WTC11 (cell line): ENCODE measurements at regions of chr11 and their contacts with region 1.

Region 1: DNA sequence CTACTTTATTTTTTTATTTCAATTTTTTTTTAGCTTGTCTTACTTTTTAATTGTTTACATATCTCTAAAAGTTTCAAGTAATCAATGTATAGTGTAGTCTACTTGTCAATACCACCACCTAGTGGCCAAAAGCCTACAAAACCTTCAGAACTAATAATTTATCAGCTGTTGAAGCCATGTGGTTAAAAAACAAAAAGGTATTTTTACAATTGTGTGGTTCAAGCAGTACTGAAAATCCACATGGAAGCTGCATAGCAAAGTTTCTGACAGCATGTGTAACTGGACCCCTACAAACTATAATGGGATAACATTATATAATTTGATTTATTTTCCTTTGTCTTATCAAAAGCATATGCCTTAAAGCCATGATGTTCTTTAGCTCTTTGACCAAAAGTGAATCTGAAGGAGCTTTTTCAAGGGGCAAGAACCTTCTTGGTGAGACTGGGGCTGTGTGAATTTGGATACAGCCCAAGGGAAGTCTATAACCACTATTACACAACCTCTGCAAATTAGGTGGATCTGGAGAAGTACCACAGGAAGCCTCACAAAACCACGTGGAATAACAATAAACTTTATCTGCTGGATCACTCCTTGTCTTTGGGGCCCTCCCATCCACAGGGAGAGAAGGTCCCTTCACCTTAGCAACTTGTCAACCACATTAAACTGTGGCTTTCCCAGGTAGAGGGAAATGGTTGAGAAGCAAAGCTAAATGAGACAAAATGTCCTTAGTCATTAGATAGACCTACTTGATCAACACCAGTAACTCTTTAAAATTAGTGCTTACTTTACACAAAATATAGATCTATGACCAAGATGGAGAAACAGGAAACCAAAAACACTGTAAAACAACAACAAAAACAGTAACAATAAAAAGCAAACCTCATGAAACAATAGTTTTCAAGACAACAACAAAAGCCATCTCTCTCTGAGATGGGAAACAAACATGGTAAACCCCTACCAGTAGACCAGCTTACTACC is 9.9 kb downstream of the NARS2 start:
- DNase-seq: no peak
- ATAC-seq: peak; percentile 24; the same call in 1 of the 2 replicates
- H3K4me3 Mint-ChIP-seq: no peak overlapping the region
- H3K27ac Mint-ChIP-seq: peak overlapping the region; percentile 1; the same call in 1 of the 2 replicates
- H3K4me1 Mint-ChIP-seq: peaks cover 25% of the 10 kb centered on the region
- H3K27me3 Mint-ChIP-seq: no peaks in the 10 kb centered on the region
- CTCF ChIP-seq: peak; percentile 51

Region 2: GRCh38 chr11:78542007-78542406 is 22.8 kb before region 1 on chr11:
- CTCF ChIA-PET with region 1: interaction called, 12 read pairs
- POLR2A ChIA-PET with region 1: no interaction called
- DNase-seq: no peak
- ATAC-seq: no peak
- H3K4me3 Mint-ChIP-seq: no peak overlapping the region
- H3K27ac Mint-ChIP-seq: no peak overlapping the region; the same call in 1 of the 2 replicates
- H3K4me1 Mint-ChIP-seq: no peaks in the 10 kb centered on the region
- H3K27me3 Mint-ChIP-seq: no peaks in the 10 kb centered on the region
- CTCF ChIP-seq: no peak

Region 3: GRCh38 chr11:78548911-78549590 is 15.7 kb before region 1 on chr11:
- CTCF ChIA-PET with region 1: interaction called, 11 read pairs
- POLR2A ChIA-PET with region 1: no interaction called
- DNase-seq: no peak
- ATAC-seq: peak; percentile 15; the same call in 1 of the 2 replicates
- H3K4me3 Mint-ChIP-seq: no peak overlapping the region
- H3K27ac Mint-ChIP-seq: peak overlapping the region; percentile 84
- H3K4me1 Mint-ChIP-seq: peaks cover 28% of the 10 kb centered on the region
- H3K27me3 Mint-ChIP-seq: no peaks in the 10 kb centered on the region
- CTCF ChIP-seq: no peak